B cell (primary cell): ENCODE measurements at regions of chr9 and their contacts with region 1.

Region 1: DNA sequence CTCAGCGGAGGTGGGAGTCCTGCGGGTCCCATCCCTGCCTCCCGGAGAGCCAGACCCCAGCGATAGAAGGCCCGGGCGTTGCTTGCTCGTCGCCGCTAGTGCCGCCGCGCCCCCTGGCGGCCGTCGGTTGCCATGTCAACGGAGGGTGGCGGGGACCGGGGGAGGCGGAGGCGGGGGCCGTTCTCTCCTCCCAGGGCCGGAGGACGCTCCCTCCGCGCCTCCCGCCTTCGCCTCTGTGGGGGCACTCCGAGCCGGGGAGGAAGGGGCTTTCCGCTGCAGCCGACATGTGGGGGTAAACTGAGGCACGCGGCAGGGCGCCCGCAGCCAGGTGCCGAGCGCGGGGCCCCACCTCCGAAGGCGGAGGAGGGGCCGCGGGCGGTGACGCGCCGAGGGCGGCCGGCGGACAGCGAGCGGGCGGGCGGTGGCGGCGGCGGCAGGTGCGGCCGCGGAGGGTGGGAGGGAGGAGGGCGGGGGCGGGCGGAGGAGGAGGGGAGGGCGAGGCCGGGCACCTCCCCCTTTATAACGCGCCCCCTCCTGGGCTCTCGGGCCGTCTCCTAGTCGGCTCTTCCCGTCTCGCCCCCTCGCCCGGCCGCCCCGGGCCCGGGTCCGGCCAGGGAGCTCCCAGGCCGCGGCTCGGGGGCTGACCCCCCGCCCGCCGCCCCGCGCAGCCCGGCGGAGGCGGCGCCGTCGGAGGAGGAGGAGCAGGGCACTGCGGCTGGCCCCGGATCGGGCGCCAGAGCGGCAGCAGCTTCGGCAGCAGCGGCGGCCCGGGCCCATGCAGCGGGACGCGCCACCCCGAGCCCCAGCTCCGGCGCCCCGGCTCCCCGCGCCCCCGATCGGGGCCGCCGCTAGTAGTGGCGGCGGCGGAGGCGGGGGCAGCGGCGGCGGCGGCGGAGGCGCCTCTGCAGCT is 556 bp upstream of the CDK9 start:
- DNase-seq: peak; percentile 95
- ATAC-seq: peak; percentile 62
- H3K4me3 ChIP-seq: peak overlapping the region in 4 of 5 experiments; percentile 48 to 99 (median 92)
- H3K4me3 Mint-ChIP-seq: peak overlapping the region; percentile 90
- H3K27ac ChIP-seq: peak overlapping the region; percentile 91 to 95
- H3K27ac Mint-ChIP-seq: peak overlapping the region; percentile 98
- H3K4me1 ChIP-seq: peaks cover 44 to 60% of the 10 kb centered on the region in 2 donors
- H3K4me1 Mint-ChIP-seq: peaks cover 56% of the 10 kb centered on the region
- H3K27me3 ChIP-seq: no peaks in the 10 kb centered on the region
- H3K27me3 Mint-ChIP-seq: no peaks in the 10 kb centered on the region
- CTCF ChIP-seq: peak; percentile 80

Region 2: DNA sequence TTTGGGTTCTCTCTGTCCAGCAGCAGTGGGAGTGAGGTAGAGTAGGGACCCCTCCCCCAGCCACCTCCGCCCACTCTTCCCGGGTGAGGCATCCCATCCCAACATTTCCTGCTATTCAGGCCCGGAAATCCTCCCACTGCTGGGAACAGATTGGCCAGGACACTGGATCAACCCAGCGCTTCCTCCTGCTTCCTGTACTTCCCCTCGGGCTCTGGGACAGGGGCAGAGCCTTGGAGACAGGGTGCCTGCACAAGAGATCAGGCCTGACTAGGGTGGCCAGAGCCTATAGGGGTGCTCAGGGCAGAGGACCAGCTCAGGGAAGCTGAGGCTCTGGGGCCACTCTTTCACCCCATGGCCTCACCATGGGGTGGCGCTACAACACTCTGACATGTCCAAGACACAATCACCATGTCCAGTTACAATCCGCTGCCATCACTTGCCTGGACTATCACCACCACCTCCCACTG is 21.3 kb before region 1 on chr9:
- CTCF ChIA-PET with region 1: interaction called, 47 read pairs
- POLR2A ChIA-PET with region 1: interaction called, 18 read pairs
- intact Hi-C with region 1: no loop called
- DNase-seq: peak; percentile 44
- ATAC-seq: peak; percentile 39
- H3K4me3 ChIP-seq: no peak overlapping the region
- H3K4me3 Mint-ChIP-seq: no peak overlapping the region
- H3K27ac ChIP-seq: peak overlapping the region in 1 of 2 donors; percentile 45
- H3K27ac Mint-ChIP-seq: peak overlapping the region; percentile 73
- H3K4me1 ChIP-seq: peaks cover 22 to 44% of the 10 kb centered on the region in 2 donors
- H3K4me1 Mint-ChIP-seq: peaks cover 60% of the 10 kb centered on the region
- H3K27me3 ChIP-seq: no peaks in the 10 kb centered on the region
- H3K27me3 Mint-ChIP-seq: no peaks in the 10 kb centered on the region
- CTCF ChIP-seq: peak; percentile 34

Region 3: DNA sequence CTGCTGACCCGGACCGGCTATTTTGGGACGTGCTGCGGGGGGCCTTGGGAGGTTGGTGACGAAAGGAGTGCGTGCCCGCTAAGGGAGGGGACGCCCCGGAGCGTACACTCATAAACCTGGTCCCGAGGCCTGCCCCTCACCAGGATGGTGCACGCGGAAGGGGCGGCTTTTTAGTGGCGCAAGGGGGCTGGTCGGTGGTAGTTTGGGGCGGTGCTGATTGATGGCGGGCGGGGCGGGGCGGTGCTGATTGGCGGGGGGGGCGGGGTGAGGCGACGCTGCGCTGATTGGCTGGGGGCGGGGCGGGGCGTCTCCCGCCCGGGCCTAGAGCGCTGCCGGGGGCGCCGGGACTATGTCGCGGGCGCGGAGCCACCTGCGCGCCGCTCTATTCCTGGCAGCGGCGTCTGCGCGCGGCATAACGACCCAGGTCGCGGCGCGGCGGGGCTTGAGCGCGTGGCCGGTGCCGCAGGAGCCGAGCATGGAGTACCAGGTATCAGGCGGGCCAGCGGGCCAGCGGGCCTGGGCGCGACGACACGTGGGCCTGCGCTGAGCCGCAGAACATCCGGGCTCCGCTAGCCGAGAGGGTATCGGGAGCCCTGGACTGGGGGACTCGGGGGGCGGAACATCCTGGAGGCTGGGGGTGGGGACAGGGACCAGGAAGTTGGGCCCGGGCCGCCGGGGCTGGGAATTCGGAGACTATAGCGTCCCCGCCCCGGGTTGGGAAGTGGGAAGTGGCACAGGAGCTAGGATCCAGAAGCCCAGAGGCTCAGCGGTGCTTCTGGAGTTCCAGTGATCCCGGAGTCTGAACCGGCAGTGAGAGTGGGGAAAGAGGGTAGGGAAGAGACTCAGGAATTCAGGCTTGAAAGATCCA is 17.5 kb after region 1 on chr9 and contains the start of gene FPGS:
- CTCF ChIA-PET with region 1: interaction called, 5 read pairs
- POLR2A ChIA-PET with region 1: interaction called, 11 read pairs
- intact Hi-C with region 1: loop called (anchors 1 kb)
- DNase-seq: peak; percentile 93
- ATAC-seq: peak; percentile 84
- H3K4me3 ChIP-seq: peak within 1 kb of the TSS; percentile 65 to 96 (median 88)
- H3K4me3 Mint-ChIP-seq: peak within 1 kb of the TSS; percentile 91
- H3K27ac ChIP-seq: peak within 1 kb of the TSS; percentile 68 to 90
- H3K27ac Mint-ChIP-seq: peak within 1 kb of the TSS; percentile 92
- H3K4me1 ChIP-seq: peaks cover 20 to 31% of the 10 kb centered on the region in 2 donors
- H3K4me1 Mint-ChIP-seq: peaks cover 33% of the 10 kb centered on the region
- H3K27me3 ChIP-seq: no peaks in the 10 kb centered on the region
- H3K27me3 Mint-ChIP-seq: no peaks in the 10 kb centered on the region
- CTCF ChIP-seq: no peak
- total RNA-seq, gene FPGS: 136 and 137 TPM in 2 replicates